ENCODE measurements at regions of chr4 and their contacts with region 1.

Region 1: DNA sequence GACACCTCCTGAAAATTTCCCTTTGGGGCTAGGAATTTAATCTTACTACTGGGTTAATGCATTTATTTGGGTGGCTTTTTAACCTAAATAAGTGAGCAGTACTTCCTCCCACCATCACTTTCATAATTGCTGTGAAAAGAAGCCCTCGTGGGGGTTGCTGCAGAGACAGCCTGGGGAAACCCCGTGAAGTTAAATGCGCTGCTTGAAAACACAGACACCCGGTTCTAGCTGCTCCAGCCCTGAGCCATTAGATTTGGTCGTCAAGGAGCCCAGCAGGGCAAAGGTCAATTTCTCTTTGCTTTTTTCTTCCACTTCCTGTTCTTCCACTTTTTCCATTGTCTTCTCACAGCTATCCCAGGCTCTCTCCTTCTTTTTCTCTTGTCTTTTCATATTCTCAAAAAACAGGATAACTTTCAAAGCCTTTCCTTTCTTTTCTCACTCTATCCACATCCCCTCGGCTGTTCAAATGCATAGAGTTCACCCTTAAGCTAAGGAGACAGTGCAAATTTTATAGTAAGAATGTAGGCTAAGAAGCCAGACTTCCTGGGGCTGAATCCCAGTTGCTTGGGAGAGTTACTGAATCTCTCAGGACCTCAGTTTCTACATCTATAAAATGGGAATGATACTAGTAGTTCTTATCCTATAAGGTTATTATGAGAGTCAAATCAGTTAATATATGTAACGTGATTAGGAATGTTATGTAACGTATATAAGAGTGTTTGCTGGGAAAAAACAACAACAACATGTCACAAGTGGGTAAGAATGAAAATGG is 91.5 kb upstream of the ZNF827 start:
- DNase-seq: peak; percentile 35
- ATAC-seq: peak; percentile 97
- H3K4me3 Mint-ChIP-seq: peak overlapping the region; percentile 63
- H3K27ac Mint-ChIP-seq: peak overlapping the region; percentile 86
- H3K4me1 Mint-ChIP-seq: peaks cover 51% of the 10 kb centered on the region
- H3K27me3 Mint-ChIP-seq: no peaks in the 10 kb centered on the region
- CTCF ChIP-seq: no peak

Region 2: DNA sequence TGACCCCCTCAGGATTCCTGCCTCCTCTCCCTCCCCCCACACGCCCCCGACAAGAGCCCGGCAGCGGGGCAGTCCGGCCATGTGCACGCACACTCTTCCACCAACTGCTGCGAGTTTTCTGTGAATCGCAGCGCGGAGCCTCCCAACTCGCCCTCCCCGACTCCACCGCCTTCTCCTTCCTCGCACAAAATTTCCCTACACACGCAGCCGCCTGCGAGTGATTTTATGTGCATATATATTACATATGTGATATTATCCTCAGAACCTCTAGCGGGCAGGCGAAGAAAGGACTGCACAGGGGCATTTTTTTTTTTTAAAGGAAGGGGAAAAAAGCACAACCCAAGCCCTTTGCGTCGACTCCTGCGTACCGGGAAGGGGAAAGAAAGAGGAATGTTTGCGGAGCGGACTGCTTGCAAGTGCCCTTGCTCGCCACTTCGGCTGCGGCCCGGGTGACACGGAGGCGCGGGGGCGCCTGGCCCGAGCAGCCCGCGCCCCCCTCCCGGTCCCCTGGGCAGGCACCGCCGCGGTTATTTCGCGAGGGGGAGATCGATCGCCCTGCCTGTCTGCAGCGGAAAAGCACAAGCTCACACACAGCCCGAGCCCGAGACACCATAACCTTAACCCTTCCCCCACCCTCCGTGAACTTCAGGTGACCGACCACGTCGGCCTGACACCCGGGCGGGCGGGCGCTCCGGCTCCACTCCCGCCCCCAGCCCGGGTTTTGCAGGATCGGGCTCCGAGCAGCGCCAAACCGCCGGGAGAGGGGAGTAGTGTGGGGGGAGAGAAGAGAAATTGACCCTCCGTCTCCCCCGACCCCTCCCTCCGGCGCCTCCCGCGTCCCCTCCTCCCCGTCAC is 93.8 kb before region 1 on chr4:
- CTCF ChIA-PET with region 1: no interaction called
- POLR2A ChIA-PET with region 1: interaction called, 10 read pairs
- intact Hi-C with region 1: loop called (anchors 1 kb)
- DNase-seq: peak; percentile 57
- ATAC-seq: peak; percentile 49
- H3K4me3 Mint-ChIP-seq: peak overlapping the region; percentile 96
- H3K27ac Mint-ChIP-seq: peak overlapping the region; percentile 92
- H3K4me1 Mint-ChIP-seq: peaks cover 49% of the 10 kb centered on the region
- H3K27me3 Mint-ChIP-seq: no peaks in the 10 kb centered on the region
- CTCF ChIP-seq: no peak

Region 3: DNA sequence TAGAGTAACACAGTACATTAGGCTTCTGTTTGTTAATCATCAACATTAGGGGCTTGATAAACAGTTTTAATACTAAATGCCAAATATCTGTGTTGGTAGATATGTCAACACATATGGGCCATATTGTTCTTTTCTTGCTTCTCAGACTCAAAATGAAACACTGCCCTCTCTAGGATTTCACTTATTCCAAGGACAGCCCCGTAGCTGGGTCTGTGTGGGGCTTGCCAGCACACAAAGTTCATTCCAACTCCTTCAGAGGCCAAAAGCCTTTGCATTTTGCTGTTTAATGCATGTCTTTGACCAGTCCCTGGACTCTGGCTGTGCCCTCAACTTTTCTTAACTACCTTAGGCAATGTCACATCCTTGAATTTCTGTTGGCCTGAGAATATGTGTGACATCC is 10.5 kb after region 1 on chr4:
- CTCF ChIA-PET with region 1: no interaction called
- POLR2A ChIA-PET with region 1: no interaction called
- intact Hi-C with region 1: loop called (anchors 1 kb)
- DNase-seq: no peak
- ATAC-seq: no peak
- H3K4me3 Mint-ChIP-seq: no peak overlapping the region
- H3K27ac Mint-ChIP-seq: no peak overlapping the region
- H3K4me1 Mint-ChIP-seq: peaks cover 33% of the 10 kb centered on the region
- H3K27me3 Mint-ChIP-seq: no peaks in the 10 kb centered on the region
- CTCF ChIP-seq: no peak

Region 4: DNA sequence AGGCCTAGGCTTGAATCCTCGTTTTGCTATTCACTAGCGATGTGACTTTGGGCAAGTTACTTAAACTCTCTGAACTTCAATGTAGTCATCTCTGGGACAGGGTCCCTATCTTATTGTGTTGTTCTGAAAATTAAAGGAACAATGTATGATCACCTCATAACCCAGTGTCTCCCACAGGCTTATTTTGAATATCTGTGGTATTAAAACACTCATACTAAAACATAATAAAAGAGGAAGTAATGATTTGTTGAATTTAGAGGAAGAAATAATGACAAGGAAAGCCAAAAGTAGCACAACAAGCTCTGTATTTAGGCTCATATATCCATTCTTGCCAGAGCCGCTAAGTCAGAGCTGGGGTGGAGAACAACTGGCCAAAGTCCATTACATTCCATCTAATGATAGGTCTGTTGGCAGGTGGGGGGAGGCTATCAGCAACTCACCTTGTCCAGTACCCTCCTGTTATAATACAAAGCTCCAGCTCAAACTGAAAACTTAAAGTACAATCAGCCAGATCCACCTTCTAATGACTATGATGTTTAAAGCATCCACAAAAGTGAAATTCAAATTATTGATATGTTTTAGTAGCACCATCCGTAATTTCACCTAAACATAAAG is 80.9 kb after region 1 on chr4:
- CTCF ChIA-PET with region 1: interaction called, 3 read pairs
- POLR2A ChIA-PET with region 1: no interaction called
- intact Hi-C with region 1: loop called (anchors 2 kb)
- DNase-seq: no peak
- ATAC-seq: peak; percentile 88
- H3K4me3 Mint-ChIP-seq: peak overlapping the region; percentile 33
- H3K27ac Mint-ChIP-seq: peak overlapping the region; percentile 63
- H3K4me1 Mint-ChIP-seq: peaks cover 34% of the 10 kb centered on the region
- H3K27me3 Mint-ChIP-seq: no peaks in the 10 kb centered on the region
- CTCF ChIP-seq: no peak

Region 5: GRCh38 chr4:146342600-146343192 is 312.6 kb after region 1 on chr4:
- CTCF ChIA-PET with region 1: no interaction called
- POLR2A ChIA-PET with region 1: no interaction called
- intact Hi-C with region 1: loop called (anchors 5 kb)
- DNase-seq: no peak
- ATAC-seq: no peak
- H3K4me3 Mint-ChIP-seq: no peak overlapping the region
- H3K27ac Mint-ChIP-seq: no peak overlapping the region
- H3K4me1 Mint-ChIP-seq: peaks cover 5% of the 10 kb centered on the region
- H3K27me3 Mint-ChIP-seq: no peaks in the 10 kb centered on the region
- CTCF ChIP-seq: no peak

Region 6: DNA sequence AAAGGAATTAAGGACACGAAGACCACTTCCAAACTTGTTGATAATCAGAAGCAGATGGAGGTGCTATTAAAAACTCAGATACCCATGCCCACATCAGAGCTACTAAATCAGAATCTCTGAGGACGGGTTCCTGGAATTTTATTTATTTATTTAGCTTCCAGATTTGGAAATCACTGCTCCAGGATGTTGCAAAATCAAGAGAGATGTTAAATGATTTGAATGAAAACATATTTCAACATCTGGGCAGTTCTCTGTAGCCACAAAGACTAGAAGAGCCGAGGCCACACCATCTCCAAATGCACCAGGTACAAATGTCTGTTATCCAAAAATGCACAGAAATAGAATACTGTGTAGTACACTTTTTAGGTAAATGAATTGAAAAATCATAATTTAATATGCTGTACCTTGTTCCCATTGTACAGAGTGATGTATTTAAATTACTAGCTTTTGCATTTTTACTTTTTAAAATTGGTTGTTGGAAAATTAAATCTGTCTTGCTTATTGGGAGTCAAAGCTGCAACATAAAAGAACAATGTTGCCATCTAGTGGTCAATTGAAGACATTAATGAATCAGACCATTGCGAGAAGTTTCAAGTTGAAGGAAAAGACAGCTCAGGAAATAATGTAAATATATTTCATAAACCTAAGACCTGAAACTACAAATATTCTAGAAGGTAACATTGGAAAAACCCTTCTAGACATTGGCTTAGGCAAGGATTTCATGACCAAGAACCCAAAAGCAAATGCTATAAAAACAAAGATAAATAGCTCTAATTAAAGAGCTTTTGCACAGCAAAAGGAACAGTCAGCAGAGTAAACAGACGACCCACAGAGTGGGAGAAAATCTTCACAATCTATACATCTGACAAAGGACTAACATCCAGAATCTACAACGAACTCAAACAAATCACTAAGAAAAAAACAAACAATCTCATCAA is 1066.8 kb after region 1 on chr4:
- CTCF ChIA-PET with region 1: interaction called, 10 read pairs
- POLR2A ChIA-PET with region 1: no interaction called
- intact Hi-C with region 1: no loop called
- DNase-seq: no peak
- ATAC-seq: peak; percentile 37
- H3K4me3 Mint-ChIP-seq: no peak overlapping the region
- H3K27ac Mint-ChIP-seq: no peak overlapping the region
- H3K4me1 Mint-ChIP-seq: no peaks in the 10 kb centered on the region
- H3K27me3 Mint-ChIP-seq: peaks cover 18% of the 10 kb centered on the region
- CTCF ChIP-seq: peak; percentile 47